CD14-positive monocyte (primary cell): ENCODE measurements at regions of chr11 and their contacts with region 1.

Region 1: GRCh38 chr11:118216621-118217481 is 8.0 kb downstream of the JAML start:
- DNase-seq: peak in 1 of 3 donors; percentile 58
- H3K4me3 ChIP-seq: peak overlapping the region in 2 of 3 experiments; percentile 35 to 82
- H3K4me3 Mint-ChIP-seq: peak overlapping the region; percentile 62 to 88
- H3K27ac ChIP-seq: peak overlapping the region in 1 of 2 donors; percentile 82
- H3K27ac Mint-ChIP-seq: peak overlapping the region; percentile 79 to 95 (median 90)
- H3K4me1 ChIP-seq: peaks cover 100% of the 10 kb centered on the region in 2 donors
- H3K4me1 Mint-ChIP-seq: peaks cover 98% of the 10 kb centered on the region
- H3K27me3 ChIP-seq: no peaks in the 10 kb centered on the region
- H3K27me3 Mint-ChIP-seq: peaks cover 0 to 3% (median 1%) of the 10 kb centered on the region in 3 donors
- CTCF ChIP-seq: no peak

Region 2: GRCh38 chr11:118227865-118228785 is 11.3 kb after region 1 on chr11:
- intact Hi-C with region 1: loop called in 1 of 2 experiments (anchors 2 kb)
- DNase-seq: peak; percentile 79 to 91 (median 86)
- H3K4me3 ChIP-seq: peak overlapping the region in 1 of 3 experiments; percentile 23
- H3K4me3 Mint-ChIP-seq: peak overlapping the region in 1 of 2 donors; percentile 84
- H3K27ac ChIP-seq: peak overlapping the region; percentile 90
- H3K27ac Mint-ChIP-seq: no peak overlapping the region
- H3K4me1 ChIP-seq: peaks cover 73 to 79% of the 10 kb centered on the region in 2 donors
- H3K4me1 Mint-ChIP-seq: peaks cover 69% of the 10 kb centered on the region
- H3K27me3 ChIP-seq: no peaks in the 10 kb centered on the region
- H3K27me3 Mint-ChIP-seq: no peaks in the 10 kb centered on the region
- CTCF ChIP-seq: no peak

Region 3: GRCh38 chr11:118251858-118252652 is 35.2 kb after region 1 on chr11 and contains the start of gene MPZL3:
- intact Hi-C with region 1: loop called in 1 of 2 experiments (anchors 5 kb)
- DNase-seq: peak; percentile 45 to 72 (median 62)
- H3K4me3 ChIP-seq: peak within 1 kb of the TSS; percentile 84 to 99 (median 98)
- H3K4me3 Mint-ChIP-seq: peak within 1 kb of the TSS; percentile 97 to 100
- H3K27ac ChIP-seq: peak within 1 kb of the TSS; percentile 94 to 99
- H3K27ac Mint-ChIP-seq: peak within 1 kb of the TSS; percentile 95 to 98 (median 98)
- H3K4me1 ChIP-seq: peaks cover 16 to 42% of the 10 kb centered on the region in 2 donors
- H3K4me1 Mint-ChIP-seq: peaks cover 25% of the 10 kb centered on the region
- H3K27me3 ChIP-seq: no peaks in the 10 kb centered on the region
- H3K27me3 Mint-ChIP-seq: peaks cover 0 to 4% (median 0%) of the 10 kb centered on the region in 3 donors
- CTCF ChIP-seq: no peak
- polyA plus RNA-seq, gene MPZL3: 4.2 to 8.5 (median 8.0) TPM

Region 4: GRCh38 chr11:118263695-118264567 is 47.1 kb after region 1 on chr11 and contains the start of gene MPZL2:
- intact Hi-C with region 1: loop called in 1 of 2 experiments (anchors 5 kb)
- DNase-seq: peak in 1 of 3 donors; percentile 12
- H3K4me3 ChIP-seq: peak within 1 kb of the TSS; percentile 39 to 79 (median 48)
- H3K4me3 Mint-ChIP-seq: peak within 1 kb of the TSS; percentile 92 to 100
- H3K27ac ChIP-seq: peak within 1 kb of the TSS; percentile 22 to 45
- H3K27ac Mint-ChIP-seq: peak within 1 kb of the TSS; percentile 40 to 87 (median 79)
- H3K4me1 ChIP-seq: peaks cover 33 to 44% of the 10 kb centered on the region in 2 donors
- H3K4me1 Mint-ChIP-seq: peaks cover 50% of the 10 kb centered on the region
- H3K27me3 ChIP-seq: no peaks in the 10 kb centered on the region
- H3K27me3 Mint-ChIP-seq: peaks cover 7 to 15% (median 8%) of the 10 kb centered on the region in 3 donors
- CTCF ChIP-seq: no peak
- polyA plus RNA-seq, gene MPZL2: 8.0 to 18.6 (median 14.2) TPM